Tibial artery (tissue), 4 donors: ENCODE measurements at regions of chr7 and their contacts with region 1.

Region 1: DNA sequence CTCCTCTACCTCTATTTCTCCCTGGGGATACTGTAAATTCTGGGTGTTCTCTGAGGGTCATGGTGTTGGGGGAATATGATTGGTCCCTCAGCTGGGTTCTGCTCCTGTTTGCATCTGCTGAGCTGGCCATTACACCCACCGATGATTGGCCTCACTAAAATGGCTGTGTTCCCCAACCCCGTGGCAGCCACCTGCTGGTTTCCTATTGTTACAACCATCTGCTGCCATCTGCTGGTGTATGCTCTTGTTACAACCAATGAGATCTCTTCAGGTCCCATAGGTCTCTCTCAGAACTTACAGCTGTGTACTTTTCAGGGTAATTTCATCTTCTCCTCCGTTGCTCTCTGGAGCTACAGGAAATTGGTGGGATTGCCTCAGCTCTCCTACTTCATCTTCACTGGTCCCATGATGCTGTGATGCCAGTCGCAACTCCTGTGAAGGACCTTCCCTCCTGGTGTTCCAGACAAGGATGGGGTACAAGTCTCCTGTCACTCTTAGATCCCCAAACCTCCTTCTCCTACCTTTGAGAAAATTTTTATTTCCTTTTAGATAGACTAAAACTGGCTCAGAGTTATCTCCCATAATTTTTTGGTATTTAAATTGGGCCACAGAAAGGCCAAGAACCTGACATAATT is 303.5 kb upstream of the SMIM30 start:
- DNase-seq: peak; percentile 75 to 85
- H3K4me3 ChIP-seq: no peak overlapping the region
- H3K27ac ChIP-seq: no peak overlapping the region
- H3K4me1 ChIP-seq: no peaks in the 10 kb centered on the region
- H3K27me3 ChIP-seq: no peaks in the 10 kb centered on the region
- CTCF ChIP-seq: peak; percentile 76 to 81

Region 2: DNA sequence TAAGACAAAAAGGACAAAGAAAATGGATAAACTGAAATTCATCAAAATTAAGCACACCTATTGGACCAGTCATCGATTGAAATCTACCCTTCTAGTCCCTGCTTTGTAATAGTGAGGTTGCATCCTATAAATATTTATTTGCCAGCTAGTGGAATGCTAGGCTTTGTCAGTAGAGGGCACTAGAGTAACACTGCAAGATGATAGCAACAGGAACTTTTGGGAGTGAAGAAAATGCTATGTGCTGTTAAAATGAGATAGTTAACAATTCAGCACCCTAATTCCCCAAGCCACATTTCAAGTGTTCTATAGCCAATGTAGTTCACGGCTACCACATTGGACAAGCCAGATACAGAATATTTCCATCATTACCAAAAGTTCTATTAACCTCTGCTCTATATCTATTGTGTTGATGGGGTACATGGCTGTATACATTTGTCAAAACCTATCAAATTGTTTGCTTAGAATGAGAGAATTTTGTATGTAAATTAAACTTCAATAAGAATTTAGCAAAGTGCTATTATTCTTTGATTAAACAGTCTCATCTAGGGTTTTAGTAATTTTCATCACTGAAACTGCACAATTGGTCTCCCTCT is 871.2 kb before region 1 on chr7:
- intact Hi-C with region 1: loop called (anchors 10 kb)
- DNase-seq: no peak
- H3K4me3 ChIP-seq: no peak overlapping the region
- H3K27ac ChIP-seq: no peak overlapping the region
- H3K4me1 ChIP-seq: no peaks in the 10 kb centered on the region
- H3K27me3 ChIP-seq: peaks cover 0 to 4% of the 10 kb centered on the region in 2 donors
- CTCF ChIP-seq: peak; percentile 72 to 85

Region 3: DNA sequence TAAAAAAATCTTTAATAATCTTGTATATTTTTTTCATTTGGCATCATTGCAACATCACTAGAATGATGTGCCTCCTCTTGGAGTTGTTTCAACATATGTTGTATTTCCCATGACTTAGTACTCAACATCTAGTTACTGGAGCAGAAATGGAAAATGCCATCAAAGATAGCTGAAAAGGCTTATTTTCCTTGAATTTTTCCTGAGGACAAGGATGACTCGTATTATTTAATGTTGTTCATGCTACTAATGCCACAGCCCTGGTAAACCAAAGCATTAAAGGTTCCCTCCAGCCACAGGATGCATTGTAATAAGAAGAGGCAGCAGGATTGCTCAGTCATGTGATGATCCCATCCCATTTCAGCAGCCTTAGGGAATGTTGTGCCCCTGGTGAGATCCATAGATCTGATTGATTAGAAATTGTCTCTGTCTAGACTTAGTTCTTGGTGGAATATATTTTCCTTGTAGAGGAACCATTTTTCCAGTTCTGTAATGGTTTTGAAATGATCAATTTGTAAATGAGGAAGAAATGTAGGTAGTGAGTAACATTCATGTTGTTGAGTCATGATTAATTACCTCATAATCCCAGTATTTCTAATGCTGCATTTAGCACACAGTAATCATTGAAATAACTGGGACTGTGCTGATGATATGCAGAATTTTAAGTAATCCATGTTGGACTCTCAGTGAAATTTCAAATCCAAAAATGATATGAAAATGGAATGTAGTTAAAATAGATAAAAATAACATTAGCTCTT is 212.2 kb before region 1 on chr7:
- intact Hi-C with region 1: no loop called
- DNase-seq: no peak
- H3K4me3 ChIP-seq: no peak overlapping the region
- H3K27ac ChIP-seq: no peak overlapping the region
- H3K4me1 ChIP-seq: no peaks in the 10 kb centered on the region
- H3K27me3 ChIP-seq: no peaks in the 10 kb centered on the region
- CTCF ChIP-seq: no peak